ENCODE measurements at regions of chr19 and their contacts with region 1.

Region 1: DNA sequence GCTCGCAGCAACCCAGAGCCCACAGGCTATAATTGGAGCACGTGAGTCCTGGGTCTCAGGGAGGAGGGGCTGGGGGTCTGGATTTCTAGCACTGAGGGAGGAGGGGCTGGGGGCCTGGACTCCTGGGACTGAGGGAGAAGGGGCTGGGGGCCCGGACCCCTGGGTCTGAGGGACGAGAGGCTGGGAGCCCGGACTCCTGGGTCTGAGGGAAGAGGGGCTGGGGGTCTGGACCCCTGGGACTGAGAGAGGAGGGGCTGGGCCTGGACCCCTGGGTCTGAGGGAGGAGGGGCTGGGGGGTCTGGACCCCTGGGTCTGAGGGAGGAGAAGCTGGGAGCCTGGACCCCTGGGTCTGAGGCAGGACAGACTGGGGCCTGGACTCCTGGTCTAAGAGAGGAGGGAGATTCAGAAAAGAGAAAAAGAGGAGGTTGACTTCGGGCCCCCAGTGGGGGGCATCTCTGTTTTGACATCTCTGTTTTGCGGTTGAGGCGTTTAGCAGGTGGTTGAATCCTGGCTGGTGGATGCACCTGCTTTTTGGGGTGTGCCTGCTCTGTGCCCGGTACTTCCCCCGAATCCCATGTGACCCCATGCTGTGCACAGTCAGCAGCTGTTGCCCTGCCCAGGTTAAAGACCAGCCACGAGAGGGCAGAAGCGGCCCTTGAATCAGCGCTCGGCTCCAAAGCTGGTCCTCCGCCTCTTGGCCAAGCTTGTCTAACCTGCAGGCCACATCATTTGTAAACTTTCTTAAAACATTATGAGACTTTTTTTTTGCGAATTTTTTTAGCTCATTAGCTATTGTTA is 10.5 kb downstream of the PVR start:
- DNase-seq: peak; percentile 81
- ATAC-seq: peak; percentile 83
- H3K4me3 Mint-ChIP-seq: no peak overlapping the region
- H3K27ac Mint-ChIP-seq: no peak overlapping the region
- H3K4me1 Mint-ChIP-seq: no peaks in the 10 kb centered on the region
- H3K27me3 Mint-ChIP-seq: no peaks in the 10 kb centered on the region

Region 2: DNA sequence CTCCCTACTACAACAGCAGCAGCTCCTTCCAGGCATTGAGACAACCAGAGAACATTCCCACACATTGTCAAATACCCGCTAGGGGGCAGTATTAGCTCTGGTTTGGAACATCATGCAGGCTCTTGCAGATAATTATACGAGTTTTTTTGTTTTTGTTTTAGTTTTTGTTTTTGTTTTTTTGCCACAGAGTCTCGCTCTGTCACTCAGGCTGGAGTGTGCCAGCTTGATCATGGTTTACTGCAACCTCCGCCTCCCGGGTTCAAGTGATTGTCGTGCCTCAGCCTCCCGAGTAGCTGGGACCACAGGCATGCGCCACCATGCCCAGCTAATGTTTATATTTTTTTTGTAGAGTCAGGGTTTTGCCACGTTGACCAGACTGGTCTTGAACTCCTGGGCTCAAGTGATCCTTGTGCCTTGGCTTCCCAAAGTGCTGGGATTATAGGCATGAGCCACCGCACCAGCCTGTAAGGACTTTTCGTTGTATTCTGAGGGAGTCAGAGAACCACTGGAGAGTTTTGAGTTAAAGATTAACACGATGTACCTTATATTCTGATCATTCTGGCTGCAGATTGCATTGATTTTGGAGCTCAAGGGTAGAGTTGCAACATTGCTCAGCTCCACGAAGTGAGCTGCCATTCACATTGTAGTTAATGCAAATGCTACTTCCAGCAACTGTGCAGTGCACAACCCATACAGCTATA is 83.0 kb before region 1 on chr19:
- CTCF ChIA-PET with region 1: interaction called, 28 read pairs
- DNase-seq: peak; percentile 64
- ATAC-seq: no peak
- H3K4me3 Mint-ChIP-seq: no peak overlapping the region
- H3K27ac Mint-ChIP-seq: no peak overlapping the region
- H3K4me1 Mint-ChIP-seq: peaks cover 3% of the 10 kb centered on the region
- H3K27me3 Mint-ChIP-seq: peaks cover under 1% of the 10 kb centered on the region

Region 3: DNA sequence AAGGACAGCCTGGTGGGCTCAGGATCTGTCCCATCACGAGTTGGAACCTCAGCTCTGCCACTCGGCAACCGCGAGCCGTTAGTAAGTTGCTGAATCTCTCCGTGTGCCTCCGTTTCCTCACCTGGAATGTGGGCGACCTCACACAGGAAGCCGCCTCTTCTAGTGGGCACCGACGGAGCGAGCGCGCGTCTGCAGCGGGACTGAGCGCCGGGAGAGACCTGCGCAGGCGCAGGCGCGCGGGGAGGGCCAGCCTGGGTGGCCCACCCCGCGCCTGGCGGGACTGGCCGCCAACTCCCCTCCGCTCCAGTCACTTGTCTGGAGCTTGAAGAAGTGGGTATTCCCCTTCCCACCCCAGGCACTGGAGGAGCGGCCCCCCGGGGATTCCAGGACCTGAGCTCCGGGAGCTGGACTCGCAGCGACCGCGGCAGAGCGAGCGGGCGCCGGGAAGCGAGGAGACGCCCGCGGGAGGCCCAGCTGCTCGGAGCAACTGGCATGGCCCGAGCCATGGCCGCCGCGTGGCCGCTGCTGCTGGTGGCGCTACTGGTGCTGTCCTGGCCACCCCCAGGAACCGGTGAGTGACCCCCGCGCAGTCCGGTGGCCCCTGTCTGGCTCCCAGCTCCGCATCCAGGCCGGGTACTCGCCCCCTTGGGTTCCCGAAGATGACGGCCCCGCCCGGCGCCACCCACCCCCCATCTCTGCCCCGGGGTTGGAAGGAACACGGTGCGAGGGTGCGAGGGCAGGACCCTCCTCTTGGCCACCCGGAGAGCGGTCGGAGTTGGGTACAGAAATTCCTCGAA is 10.4 kb before region 1 on chr19 and contains the start of gene PVR:
- CTCF ChIA-PET with region 1: interaction called, 15 read pairs
- DNase-seq: no peak
- ATAC-seq: peak; percentile 69
- H3K4me3 Mint-ChIP-seq: peak within 1 kb of the TSS; percentile 68
- H3K27ac Mint-ChIP-seq: no peak within 1 kb of the TSS
- H3K4me1 Mint-ChIP-seq: peaks cover 3% of the 10 kb centered on the region
- H3K27me3 Mint-ChIP-seq: peaks cover 19% of the 10 kb centered on the region
- total RNA-seq, gene PVR: 2.4 to 7.8 TPM